H1 (cell line): ENCODE measurements at regions of chr3 and their contacts with region 1.

Region 1: DNA sequence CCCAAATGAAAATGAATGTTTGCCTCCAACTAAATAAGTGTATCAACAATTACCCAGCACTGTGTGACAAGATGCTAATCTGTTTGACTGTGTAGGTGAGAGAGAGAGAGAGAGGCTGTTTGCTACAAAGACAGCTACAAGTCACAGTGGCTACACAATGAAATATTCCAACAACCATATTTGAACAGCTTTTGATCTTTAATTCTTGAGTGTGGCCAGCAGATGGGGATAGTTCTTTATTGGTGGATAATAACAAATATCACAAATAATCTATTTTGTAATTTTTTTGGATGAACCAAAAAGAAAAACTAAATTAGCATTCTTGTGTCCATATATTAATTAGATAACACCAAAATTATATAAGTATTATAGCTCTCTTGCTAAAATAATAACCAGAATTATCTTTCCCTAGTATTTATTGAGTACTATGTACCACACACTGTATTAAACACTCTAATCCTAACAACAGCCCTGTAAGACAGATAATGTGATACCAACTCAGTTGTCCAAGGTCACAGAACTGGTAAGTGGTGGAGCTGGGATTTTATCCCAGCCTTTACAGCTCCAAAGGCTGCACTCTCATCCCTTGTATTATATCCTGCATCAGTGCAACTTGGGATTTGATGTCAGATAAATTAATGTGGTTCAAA is 61.9 kb upstream of the C3orf80 start:
- DNase-seq: no peak
- H3K4me3 ChIP-seq: no peak overlapping the region
- H3K27ac ChIP-seq: no peak overlapping the region
- H3K4me1 ChIP-seq: peaks cover 0 to 12% (median 4%) of the 10 kb centered on the region in 4 experiments; a peak in 6 of 7 replicates
- H3K27me3 ChIP-seq: no peaks in the 10 kb centered on the region
- CTCF ChIP-seq: peak in 1 of 3 experiments; percentile 9; a peak in 1 of 4 replicates
- EP300 ChIP-seq: no peak
- POLR2A ChIP-seq: no peak
- RAD21 ChIP-seq: peak in 1 of 2 experiments; percentile 27

Region 2: GRCh38 chr3:160098261-160098908 is 65.0 kb before region 1 on chr3:
- CTCF ChIA-PET with region 1: no interaction called
- POLR2A ChIA-PET with region 1: no interaction called
- DNase-seq: no peak
- H3K4me3 ChIP-seq: no peak overlapping the region
- H3K27ac ChIP-seq: no peak overlapping the region; the same call in 1 of the 2 replicates
- H3K4me1 ChIP-seq: no peaks in the 10 kb centered on the region
- H3K27me3 ChIP-seq: no peaks in the 10 kb centered on the region
- CTCF ChIP-seq: no peak
- EP300 ChIP-seq: no peak
- POLR2A ChIP-seq: no peak
- RAD21 ChIP-seq: no peak

Region 3: DNA sequence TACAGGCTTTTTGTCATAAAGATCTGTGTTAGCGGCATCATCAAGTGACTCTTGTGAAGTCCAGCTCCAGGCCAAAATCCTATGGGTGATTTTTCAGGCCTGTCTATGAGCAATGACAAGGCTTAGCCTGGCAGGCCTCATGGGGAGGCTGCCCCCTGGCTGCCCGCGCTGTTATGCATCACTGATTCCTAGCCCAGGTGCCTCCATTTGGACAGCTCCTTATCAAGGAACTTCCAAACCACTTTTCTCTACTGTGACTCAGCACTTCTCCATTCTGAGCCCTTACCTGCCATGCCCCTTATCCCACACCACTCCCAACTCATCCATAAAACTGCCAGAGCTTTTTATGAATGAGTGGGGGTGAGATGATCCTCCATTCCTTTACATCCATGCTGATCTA is 29.6 kb before region 1 on chr3:
- CTCF ChIA-PET with region 1: interaction called, 12 read pairs
- POLR2A ChIA-PET with region 1: no interaction called
- DNase-seq: peak; percentile 19 to 47
- H3K4me3 ChIP-seq: no peak overlapping the region
- H3K27ac ChIP-seq: no peak overlapping the region
- H3K4me1 ChIP-seq: no peaks in the 10 kb centered on the region
- H3K27me3 ChIP-seq: no peaks in the 10 kb centered on the region
- CTCF ChIP-seq: peak; percentile 60 to 68 (median 67)
- EP300 ChIP-seq: no peak
- POLR2A ChIP-seq: no peak
- RAD21 ChIP-seq: peak; percentile 48 to 63

Region 4: DNA sequence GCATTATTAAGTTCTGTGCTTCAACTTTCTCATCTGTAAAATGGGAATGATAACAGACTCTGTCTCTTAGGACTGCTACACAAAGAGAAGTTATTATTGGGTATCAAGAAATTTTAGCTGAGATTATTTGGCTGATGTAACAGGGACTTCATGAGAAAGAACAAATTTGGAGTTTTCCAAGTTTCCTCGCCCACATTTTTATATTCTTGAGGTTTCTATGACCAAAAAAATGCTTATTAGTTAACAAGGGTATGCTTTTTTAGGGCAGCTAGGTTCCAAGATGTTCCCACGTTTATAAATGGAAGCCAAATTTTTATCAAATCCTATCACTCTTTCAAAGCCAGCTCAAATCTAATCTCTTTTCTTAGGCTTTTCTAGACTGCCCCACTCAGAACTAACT is 11.3 kb after region 1 on chr3:
- CTCF ChIA-PET with region 1: interaction called, 13 read pairs
- POLR2A ChIA-PET with region 1: no interaction called
- DNase-seq: no peak
- H3K4me3 ChIP-seq: no peak overlapping the region
- H3K27ac ChIP-seq: no peak overlapping the region
- H3K4me1 ChIP-seq: no peaks in the 10 kb centered on the region
- H3K27me3 ChIP-seq: no peaks in the 10 kb centered on the region
- CTCF ChIP-seq: no peak
- EP300 ChIP-seq: no peak
- POLR2A ChIP-seq: no peak
- RAD21 ChIP-seq: no peak

Region 5: DNA sequence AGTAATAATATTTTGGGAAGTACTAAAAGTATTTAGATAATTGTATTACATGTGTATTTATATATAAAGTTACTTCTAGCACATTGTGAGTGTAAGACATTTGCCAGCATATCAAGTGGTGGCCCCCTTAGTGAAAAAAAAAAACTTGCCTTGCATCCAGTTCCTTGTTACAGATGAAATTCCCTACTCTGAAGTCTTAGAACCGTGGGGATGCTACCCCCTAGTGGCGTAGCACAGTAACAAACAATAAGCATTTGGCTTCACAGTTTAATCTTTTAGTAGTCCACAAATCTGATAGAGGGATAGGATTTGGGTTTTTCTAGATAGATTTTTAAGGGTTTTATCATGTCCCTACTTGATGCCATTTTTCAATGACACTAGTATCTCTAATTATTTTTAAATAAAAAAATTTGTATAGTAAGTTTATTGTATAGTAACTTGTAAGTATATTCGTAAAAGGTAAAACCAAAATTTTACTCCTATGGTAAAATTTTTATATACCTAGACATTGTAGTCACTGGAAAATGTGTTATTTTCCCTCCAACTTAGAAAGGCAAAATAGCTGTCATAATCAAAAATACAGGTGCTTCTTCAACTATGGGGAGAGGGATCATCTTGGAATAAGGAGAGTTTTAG is 250.4 kb after region 1 on chr3:
- CTCF ChIA-PET with region 1: interaction called, 14 read pairs
- POLR2A ChIA-PET with region 1: no interaction called
- DNase-seq: peak; percentile 39 to 67
- H3K4me3 ChIP-seq: no peak overlapping the region
- H3K27ac ChIP-seq: no peak overlapping the region
- H3K4me1 ChIP-seq: no peaks in the 10 kb centered on the region
- H3K27me3 ChIP-seq: no peaks in the 10 kb centered on the region
- CTCF ChIP-seq: peak in 2 of 3 experiments; percentile 64 to 74; a peak in 3 of 4 replicates
- EP300 ChIP-seq: no peak
- POLR2A ChIP-seq: no peak
- RAD21 ChIP-seq: peak; percentile 79 to 88